ENCODE measurements at regions of chr4 and their contacts with region 1.

Region 1: DNA sequence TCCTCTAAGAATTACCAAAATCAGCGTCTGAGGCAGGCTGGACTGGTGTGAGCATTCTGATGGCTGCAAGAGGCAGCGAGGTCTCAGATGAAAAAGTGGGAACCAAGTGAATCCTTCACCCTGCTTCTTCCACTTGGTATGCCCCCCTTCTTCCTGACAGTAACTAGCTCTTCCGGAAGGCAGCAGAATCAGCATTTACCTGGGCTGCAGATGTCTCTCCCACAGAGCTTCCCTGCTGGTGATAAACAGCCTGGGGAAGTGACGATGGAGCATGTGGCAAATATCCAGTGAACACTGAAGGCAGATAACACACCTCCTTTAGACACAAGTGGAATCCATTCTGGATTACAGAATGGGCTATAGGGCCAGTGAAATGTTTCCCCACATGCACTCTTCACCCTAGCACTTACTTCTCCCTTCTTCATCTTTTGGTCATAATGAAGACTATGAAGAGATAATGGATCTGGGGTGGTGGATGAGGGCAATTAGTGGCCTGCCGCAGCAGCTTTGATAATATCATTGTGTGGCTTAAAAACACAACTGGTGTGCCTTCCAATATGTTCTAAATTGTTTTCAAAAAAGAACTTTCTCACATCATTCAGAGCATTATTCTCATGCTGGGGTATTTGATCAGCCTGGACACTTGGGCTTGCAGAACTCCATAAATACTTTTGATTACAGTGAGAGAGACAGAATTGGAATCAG is 60.8 kb upstream of the TBC1D9 start:
- DNase-seq: no peak
- H3K4me3 ChIP-seq: no peak overlapping the region
- H3K27ac ChIP-seq: no peak overlapping the region
- H3K4me1 ChIP-seq: no peaks in the 10 kb centered on the region
- H3K27me3 ChIP-seq: peaks cover 3% of the 10 kb centered on the region
- CTCF ChIP-seq: no peak

Region 2: DNA sequence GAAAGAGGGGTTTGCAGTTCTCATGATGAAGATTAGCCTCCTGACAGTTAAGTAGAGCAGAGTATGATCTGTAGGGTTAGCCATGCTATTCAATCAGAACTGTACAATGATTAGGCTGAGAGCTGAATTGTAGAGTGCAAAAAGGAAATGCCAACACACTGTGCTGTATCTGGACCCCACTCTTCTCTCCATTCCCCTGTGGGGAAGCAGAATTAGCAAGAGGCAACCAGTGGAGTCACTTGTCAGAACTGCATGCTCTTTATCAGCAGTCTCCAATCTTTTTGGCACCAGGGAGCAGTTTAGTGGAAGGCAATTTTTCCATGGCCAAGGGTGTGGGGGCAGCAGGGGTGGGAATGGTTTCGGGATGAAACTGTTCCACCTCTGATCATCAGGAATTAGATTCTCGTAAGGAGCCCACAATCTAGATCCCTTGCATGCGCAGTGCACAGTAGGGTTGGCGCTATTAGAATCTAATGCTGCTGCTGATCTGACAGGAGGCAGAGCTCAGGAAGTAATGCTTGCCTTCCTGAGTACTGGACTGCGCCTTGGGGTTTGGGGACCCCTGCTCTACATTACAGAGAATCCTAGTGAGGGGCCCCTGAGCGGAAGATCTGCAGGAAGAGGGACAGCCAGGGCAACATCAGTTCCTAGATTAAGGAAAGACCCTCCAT is 80.2 kb before region 1 on chr4:
- CTCF ChIA-PET with region 1: no interaction called
- dilution Hi-C with region 1: no loop called
- in situ Hi-C with region 1: no loop called
- intact Hi-C with region 1: no loop called
- DNase-seq: no peak
- H3K4me3 ChIP-seq: no peak overlapping the region
- H3K27ac ChIP-seq: no peak overlapping the region
- H3K4me1 ChIP-seq: peaks cover 47% of the 10 kb centered on the region
- H3K27me3 ChIP-seq: no peaks in the 10 kb centered on the region
- CTCF ChIP-seq: no peak

Region 3: GRCh38 chr4:140800666-140801065 is 16.3 kb before region 1 on chr4:
- CTCF ChIA-PET with region 1: interaction called, 15 read pairs
- dilution Hi-C with region 1: no loop called
- in situ Hi-C with region 1: no loop called
- intact Hi-C with region 1: no loop called
- DNase-seq: no peak
- H3K4me3 ChIP-seq: no peak overlapping the region
- H3K27ac ChIP-seq: no peak overlapping the region
- H3K4me1 ChIP-seq: no peaks in the 10 kb centered on the region
- H3K27me3 ChIP-seq: no peaks in the 10 kb centered on the region
- CTCF ChIP-seq: no peak

Region 4: GRCh38 chr4:141275834-141276233 is 458.9 kb after region 1 on chr4:
- CTCF ChIA-PET with region 1: no interaction called
- dilution Hi-C with region 1: no loop called
- in situ Hi-C with region 1: no loop called
- intact Hi-C with region 1: no loop called
- DNase-seq: no peak
- H3K4me3 ChIP-seq: no peak overlapping the region
- H3K27ac ChIP-seq: no peak overlapping the region
- H3K4me1 ChIP-seq: no peaks in the 10 kb centered on the region
- H3K27me3 ChIP-seq: no peaks in the 10 kb centered on the region
- CTCF ChIP-seq: no peak